B cell (primary cell): ENCODE measurements at regions of chr16 and their contacts with region 1.

Region 1: DNA sequence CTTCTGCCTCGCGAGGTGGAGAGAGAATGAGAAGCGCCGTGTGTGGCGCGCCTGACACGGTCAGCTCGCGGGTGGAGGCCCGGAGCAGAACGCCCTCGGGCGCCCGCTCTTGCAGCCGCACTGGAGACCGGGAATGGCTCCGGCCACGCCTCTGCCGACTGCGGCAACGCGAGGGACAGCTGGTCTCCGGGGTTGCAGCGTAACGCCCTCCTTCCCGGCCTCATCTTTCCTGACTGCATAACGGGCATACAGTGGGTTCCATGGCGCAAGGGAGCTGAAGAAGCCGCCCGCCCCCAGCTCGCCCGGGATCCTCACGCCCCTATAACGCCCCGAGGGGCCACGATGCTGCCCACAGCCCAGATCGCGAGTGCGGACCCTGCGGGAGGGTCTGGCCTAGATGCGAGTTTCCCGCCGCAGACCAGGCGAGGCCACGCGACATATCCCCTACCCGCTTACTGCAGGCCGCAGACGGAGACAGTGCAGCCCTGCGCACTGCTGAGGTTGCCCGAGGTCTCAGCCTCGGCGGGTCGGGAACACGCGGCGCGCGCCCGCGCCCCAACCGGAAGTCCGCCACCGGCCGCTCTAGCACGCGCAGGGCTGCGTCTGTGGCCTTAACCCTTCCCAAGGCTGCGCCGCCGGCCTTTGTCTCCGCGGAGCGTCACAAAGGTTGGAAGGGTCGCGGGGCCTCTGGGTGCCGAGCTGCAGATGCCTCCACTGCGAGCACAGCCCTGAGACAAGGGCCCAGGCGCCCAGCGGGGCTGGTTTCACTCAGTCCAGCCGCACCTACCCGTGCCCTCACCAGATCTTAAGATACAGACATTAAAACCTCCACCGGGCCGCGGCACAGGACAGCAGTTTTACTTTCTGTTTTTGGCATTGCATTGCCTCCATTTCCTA is 18.8 kb downstream of the BCL7C start:
- DNase-seq: peak; percentile 93
- ATAC-seq: peak; percentile 88
- H3K4me3 ChIP-seq: peak overlapping the region; percentile 78 to 99 (median 81)
- H3K4me3 Mint-ChIP-seq: peak overlapping the region; percentile 97
- H3K27ac ChIP-seq: peak overlapping the region; percentile 82 to 88
- H3K27ac Mint-ChIP-seq: peak overlapping the region; percentile 97
- H3K4me1 ChIP-seq: peaks cover 16 to 21% of the 10 kb centered on the region in 2 donors
- H3K4me1 Mint-ChIP-seq: peaks cover 36% of the 10 kb centered on the region
- H3K27me3 ChIP-seq: no peaks in the 10 kb centered on the region
- H3K27me3 Mint-ChIP-seq: no peaks in the 10 kb centered on the region
- CTCF ChIP-seq: no peak

Region 2: GRCh38 chr16:30805370-30806169 is 69.5 kb before region 1 on chr16:
- CTCF ChIA-PET with region 1: interaction called, 6 read pairs
- POLR2A ChIA-PET with region 1: interaction called, 10 read pairs
- intact Hi-C with region 1: loop called (anchors 1 kb)
- DNase-seq: peak; percentile 68
- ATAC-seq: peak; percentile 81
- H3K4me3 ChIP-seq: peak overlapping the region; percentile 61 to 91 (median 87)
- H3K4me3 Mint-ChIP-seq: peak overlapping the region; percentile 92
- H3K27ac ChIP-seq: peak overlapping the region in 1 of 2 donors; percentile 65
- H3K27ac Mint-ChIP-seq: peak overlapping the region; percentile 64
- H3K4me1 ChIP-seq: peaks cover 10 to 19% of the 10 kb centered on the region in 2 donors
- H3K4me1 Mint-ChIP-seq: peaks cover 16% of the 10 kb centered on the region
- H3K27me3 ChIP-seq: peaks cover 0 to 9% (median 0%) of the 10 kb centered on the region in 4 experiments
- H3K27me3 Mint-ChIP-seq: peaks cover 6% of the 10 kb centered on the region
- CTCF ChIP-seq: no peak

Region 3: DNA sequence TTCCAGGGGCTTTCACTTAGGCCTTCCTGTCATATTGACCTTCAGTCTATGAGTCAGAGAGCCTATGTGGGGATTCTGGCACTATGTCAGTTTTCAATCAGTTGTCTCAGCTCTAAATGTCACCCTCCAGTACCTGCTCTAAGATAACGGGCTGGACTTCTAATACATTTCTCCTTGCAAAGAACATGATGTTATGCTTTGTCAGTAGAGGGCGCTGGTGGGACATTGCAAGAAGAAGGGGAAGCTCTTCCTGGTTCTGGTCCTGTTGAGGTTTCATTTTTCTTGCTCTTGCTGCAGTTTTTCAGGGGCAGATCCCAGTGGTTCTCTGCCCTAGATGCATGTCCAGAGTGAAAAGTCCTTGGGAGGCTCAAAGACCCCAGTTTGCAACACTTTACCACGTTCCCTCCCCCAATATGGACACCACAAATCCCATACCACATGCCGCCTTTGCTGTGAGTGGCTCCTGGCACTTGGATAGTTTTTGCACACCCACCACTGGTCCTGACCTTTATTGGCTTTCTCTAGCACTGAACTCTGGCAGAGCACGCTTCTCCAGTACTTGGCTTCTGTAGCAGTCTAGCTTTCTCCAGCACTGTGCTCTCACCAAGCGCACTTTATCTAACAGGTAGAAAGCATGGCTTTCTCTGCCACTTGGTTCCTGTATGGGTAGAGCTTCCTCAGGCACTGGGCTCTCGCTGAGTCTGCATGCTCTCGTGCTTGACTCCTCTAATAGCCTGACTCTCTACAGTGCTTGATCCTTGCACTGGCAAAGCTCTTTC is 30.2 kb before region 1 on chr16:
- CTCF ChIA-PET with region 1: interaction called, 36 read pairs
- POLR2A ChIA-PET with region 1: interaction called, 6 read pairs
- intact Hi-C with region 1: loop called (anchors 1 kb)
- DNase-seq: peak; percentile 89
- ATAC-seq: peak; percentile 88
- H3K4me3 ChIP-seq: peak overlapping the region in 1 of 5 experiments; percentile 11
- H3K4me3 Mint-ChIP-seq: peak overlapping the region; percentile 76
- H3K27ac ChIP-seq: no peak overlapping the region
- H3K27ac Mint-ChIP-seq: peak overlapping the region; percentile 88
- H3K4me1 ChIP-seq: peaks cover 6 to 9% of the 10 kb centered on the region in 2 donors
- H3K4me1 Mint-ChIP-seq: peaks cover 9% of the 10 kb centered on the region
- H3K27me3 ChIP-seq: no peaks in the 10 kb centered on the region
- H3K27me3 Mint-ChIP-seq: peaks cover 3% of the 10 kb centered on the region
- CTCF ChIP-seq: peak; percentile 88

Region 4: GRCh38 chr16:30902029-30902972 is 27.2 kb after region 1 on chr16:
- CTCF ChIA-PET with region 1: interaction called, 28 read pairs
- POLR2A ChIA-PET with region 1: interaction called, 15 read pairs
- intact Hi-C with region 1: loop called (anchors 1 kb)
- DNase-seq: peak; percentile 78
- ATAC-seq: peak; percentile 80
- H3K4me3 ChIP-seq: peak overlapping the region; percentile 45 to 82 (median 62)
- H3K4me3 Mint-ChIP-seq: peak overlapping the region; percentile 98
- H3K27ac ChIP-seq: peak overlapping the region; percentile 57 to 79
- H3K27ac Mint-ChIP-seq: peak overlapping the region; percentile 98
- H3K4me1 ChIP-seq: peaks cover 29 to 40% of the 10 kb centered on the region in 2 donors
- H3K4me1 Mint-ChIP-seq: peaks cover 25% of the 10 kb centered on the region
- H3K27me3 ChIP-seq: no peaks in the 10 kb centered on the region
- H3K27me3 Mint-ChIP-seq: no peaks in the 10 kb centered on the region
- CTCF ChIP-seq: no peak